ENCODE measurements at regions of chr19 and their contacts with region 1.

Region 1: GRCh38 chr19:40798223-40798996 is 581 bp upstream of the EGLN2 start:
- DNase-seq: peak; percentile 55 to 100 (median 100)
- ATAC-seq: peak; percentile 83 to 84
- H3K4me3 Mint-ChIP-seq: peak overlapping the region; percentile 88 to 99 (median 96)
- H3K27ac Mint-ChIP-seq: peak overlapping the region; percentile 98 to 100 (median 99)
- H3K4me1 Mint-ChIP-seq: peaks cover 34 to 56% (median 51%) of the 10 kb centered on the region in 4 donors
- H3K27me3 Mint-ChIP-seq: no peaks in the 10 kb centered on the region

Region 2: GRCh38 chr19:40035996-40036395 is 762.4 kb before region 1 on chr19:
- POLR2A ChIA-PET with region 1: no interaction called
- DNase-seq: no peak
- ATAC-seq: no peak
- H3K4me3 Mint-ChIP-seq: no peak overlapping the region
- H3K27ac Mint-ChIP-seq: no peak overlapping the region
- H3K4me1 Mint-ChIP-seq: no peaks in the 10 kb centered on the region
- H3K27me3 Mint-ChIP-seq: no peaks in the 10 kb centered on the region

Region 3: DNA sequence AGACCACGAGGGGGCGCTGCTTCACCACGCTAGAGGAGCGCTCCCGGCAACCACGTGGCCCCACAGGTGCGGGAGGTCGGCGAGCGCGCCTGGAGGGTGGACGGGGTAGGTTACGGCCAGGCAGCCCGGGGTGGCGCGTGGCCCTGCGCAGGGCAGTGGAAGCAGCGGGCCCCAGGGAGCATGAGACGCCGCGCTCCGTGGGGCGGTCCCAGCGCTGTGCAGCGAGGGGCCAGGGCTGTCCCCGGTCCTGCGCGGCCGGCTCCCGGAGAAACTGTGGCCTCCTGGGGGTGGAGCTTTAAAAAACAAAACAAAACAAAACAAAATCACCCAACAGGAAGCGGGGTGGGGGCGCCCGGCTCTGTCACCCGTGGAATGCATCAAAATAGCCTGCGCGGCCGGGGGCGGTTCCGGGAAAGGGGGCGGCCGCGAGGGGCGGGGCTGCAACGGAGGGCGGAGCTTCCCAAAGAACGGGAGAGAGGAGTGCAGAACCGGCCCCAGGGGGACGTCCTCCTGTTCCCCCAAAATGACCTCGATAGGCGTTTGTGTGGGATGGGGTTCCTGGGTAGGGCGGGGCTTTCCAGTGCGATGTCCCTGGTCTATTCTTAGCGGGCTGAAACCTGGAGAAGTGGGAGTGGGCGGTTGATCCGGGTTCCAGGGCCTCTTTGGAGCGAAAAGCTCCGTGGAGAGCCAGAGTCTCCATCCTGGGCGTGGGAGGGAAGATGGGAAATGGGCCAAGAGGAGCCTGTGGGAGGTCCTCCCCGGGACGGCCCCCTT is 135.3 kb before region 1 on chr19:
- POLR2A ChIA-PET with region 1: interaction called, 14 read pairs
- DNase-seq: peak; percentile 81 to 98 (median 92)
- ATAC-seq: peak; percentile 91 to 92
- H3K4me3 Mint-ChIP-seq: peak overlapping the region; percentile 76 to 91 (median 84)
- H3K27ac Mint-ChIP-seq: peak overlapping the region; percentile 63 to 93 (median 90)
- H3K4me1 Mint-ChIP-seq: peaks cover 6 to 15% (median 8%) of the 10 kb centered on the region in 4 donors
- H3K27me3 Mint-ChIP-seq: no peaks in the 10 kb centered on the region

Region 4: GRCh38 chr19:40716655-40717324 is 81.6 kb before region 1 on chr19 and contains the starts of genes COQ8B and ITPKC:
- POLR2A ChIA-PET with region 1: interaction called, 17 read pairs
- DNase-seq: peak; percentile 99 to 100 (median 99)
- ATAC-seq: peak; percentile 58 to 72
- H3K4me3 Mint-ChIP-seq: peak within 1 kb of the TSS; percentile 80 to 98 (median 92)
- H3K27ac Mint-ChIP-seq: peak within 1 kb of the TSS; percentile 90 to 100 (median 98)
- H3K4me1 Mint-ChIP-seq: peaks cover 32 to 74% (median 70%) of the 10 kb centered on the region in 4 donors
- H3K27me3 Mint-ChIP-seq: no peaks in the 10 kb centered on the region
- polyA plus RNA-seq, gene COQ8B: 9.8 to 14.8 (median 13.3) TPM
- polyA plus RNA-seq, gene ITPKC: 2.9 to 5.7 (median 4.0) TPM

Region 5: DNA sequence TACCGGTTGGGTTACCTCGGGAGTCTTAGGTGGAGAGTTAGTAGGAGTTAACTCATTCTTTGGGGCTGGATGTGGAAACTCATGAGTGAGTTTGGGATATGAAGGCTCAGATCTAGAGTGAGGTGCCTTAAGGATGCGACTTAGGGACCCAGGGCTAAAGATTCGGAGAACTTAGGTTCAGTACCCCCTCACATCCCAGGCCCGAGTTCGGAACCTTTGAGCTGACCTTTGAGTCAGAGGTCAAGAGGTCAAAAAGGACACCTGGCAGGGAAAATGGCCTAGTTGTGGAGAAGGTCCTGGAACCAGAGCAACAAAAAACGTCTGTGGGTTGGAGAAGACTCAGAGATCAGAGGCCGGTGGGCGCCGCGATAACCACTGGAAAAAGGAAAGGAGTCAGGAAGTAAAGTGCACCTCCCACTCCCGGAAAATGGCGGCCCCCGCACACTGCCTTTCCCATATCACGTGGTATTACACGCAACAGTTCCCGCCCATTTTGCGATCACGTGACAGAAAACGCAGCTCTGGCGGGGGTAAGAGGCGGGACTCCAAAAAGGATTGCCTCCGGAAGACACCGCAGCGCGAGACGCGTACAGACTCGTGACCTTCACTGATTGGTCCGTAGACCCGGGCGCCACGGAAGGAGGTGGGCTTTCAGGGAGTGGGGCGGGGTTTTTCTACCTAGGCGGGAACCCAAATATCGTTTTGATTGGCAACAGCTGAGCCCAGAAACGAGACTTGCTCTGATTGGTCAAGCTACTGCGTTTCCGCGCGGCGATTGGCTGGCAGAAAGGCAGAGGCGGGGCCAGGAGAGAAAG is 48.1 kb before region 1 on chr19 and contains the start of gene ACTMAP:
- POLR2A ChIA-PET with region 1: interaction called, 55 read pairs
- DNase-seq: peak in 9 of 10 donors; percentile 94 to 100 (median 100)
- ATAC-seq: peak; percentile 87 to 90
- H3K4me3 Mint-ChIP-seq: peak within 1 kb of the TSS; percentile 91 to 100 (median 99)
- H3K27ac Mint-ChIP-seq: peak within 1 kb of the TSS; percentile 88 to 99 (median 99)
- H3K4me1 Mint-ChIP-seq: peaks cover 28 to 52% (median 47%) of the 10 kb centered on the region in 4 donors
- H3K27me3 Mint-ChIP-seq: no peaks in the 10 kb centered on the region
- polyA plus RNA-seq, gene ACTMAP: 2.5 to 4.6 (median 3.4) TPM

Region 6: DNA sequence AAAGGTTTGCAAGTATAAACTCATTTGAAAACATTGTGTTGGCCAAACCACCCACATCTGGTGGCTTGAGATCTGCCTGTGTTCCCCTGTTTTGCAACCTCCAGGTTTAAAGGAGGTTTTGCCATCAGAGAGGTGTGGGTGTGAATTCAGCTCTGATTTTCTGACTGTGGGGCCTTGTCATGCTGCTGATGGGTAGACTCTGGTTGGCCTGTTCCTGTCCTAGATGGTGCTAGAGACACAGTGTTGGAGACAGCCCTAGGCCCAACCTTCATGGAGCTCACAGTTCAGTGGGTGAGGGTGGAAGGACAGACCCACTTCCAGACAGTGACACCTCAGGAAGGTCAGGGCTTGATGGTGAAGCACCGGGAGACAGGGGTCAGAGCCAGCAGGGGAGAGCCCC is 12.9 kb before region 1 on chr19:
- POLR2A ChIA-PET with region 1: interaction called, 301 read pairs
- DNase-seq: no peak
- ATAC-seq: no peak
- H3K4me3 Mint-ChIP-seq: no peak overlapping the region
- H3K27ac Mint-ChIP-seq: peak overlapping the region in 3 of 10 donors; percentile 34 to 68 (median 41)
- H3K4me1 Mint-ChIP-seq: peaks cover 10 to 19% (median 16%) of the 10 kb centered on the region in 4 donors
- H3K27me3 Mint-ChIP-seq: no peaks in the 10 kb centered on the region